Activated T-helper 1 cell treated with anti-CD3 and anti-CD28 coated beads, Interleukin-12 subunit alpha, Interleukin-12 subunit beta, Interleukin-2, Interleukin-4 antibody, amounts not matched to agents 30 ng/mL and 10 ng/mL and 1 ng/mL, durations not matched to agents 14 hours and 24 hours and 36 hours (primary cell): ENCODE measurements at regions of chr17 and their contacts with region 1.

Region 1: DNA sequence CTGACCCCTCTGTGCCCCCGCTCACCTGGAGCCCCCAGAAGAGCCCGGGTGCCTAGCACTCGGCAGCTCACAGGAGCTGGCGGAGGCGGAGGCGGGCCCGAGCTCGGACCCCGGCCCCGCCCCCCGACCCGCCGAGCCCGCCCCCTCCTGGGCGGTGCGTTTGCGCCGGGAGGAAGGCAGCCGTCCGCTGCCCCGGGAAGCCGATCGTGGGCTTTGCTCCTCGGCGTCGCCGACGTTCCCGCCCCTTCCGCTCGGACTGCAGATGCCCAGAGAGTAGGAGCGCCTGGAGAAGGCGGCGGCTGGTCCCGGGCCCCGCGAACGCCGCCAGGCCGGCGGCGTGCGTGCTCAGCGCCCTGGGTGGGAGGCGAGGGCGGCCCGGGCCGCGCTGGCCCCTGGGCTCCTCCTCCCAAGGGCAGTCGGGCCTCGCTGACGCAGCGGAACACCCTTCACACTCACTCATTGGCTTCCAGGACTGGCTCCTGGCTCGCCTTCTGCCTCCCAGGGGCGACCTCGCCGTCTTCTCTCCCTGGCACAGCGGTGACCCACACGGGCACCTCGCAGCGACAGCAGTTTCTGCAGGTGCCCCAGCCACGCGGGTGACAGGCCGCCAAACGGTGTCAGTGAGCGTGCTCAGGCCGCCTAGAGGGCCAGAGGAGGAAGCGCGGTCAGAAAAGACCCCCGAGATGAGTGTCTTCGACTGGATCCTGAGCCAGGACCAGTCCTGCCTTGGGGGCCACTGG is at the start of gene PLSCR3:
- DNase-seq: peak; percentile 82
- H3K4me3 Mint-ChIP-seq: peak within 1 kb of the TSS; percentile 97
- H3K27ac Mint-ChIP-seq: peak within 1 kb of the TSS; percentile 96
- H3K4me1 Mint-ChIP-seq: peaks cover 22% of the 10 kb centered on the region
- H3K27me3 Mint-ChIP-seq: peaks cover 2% of the 10 kb centered on the region
- total RNA-seq, gene PLSCR3: 77.1 and 78.2 TPM in 2 replicates

Region 2: DNA sequence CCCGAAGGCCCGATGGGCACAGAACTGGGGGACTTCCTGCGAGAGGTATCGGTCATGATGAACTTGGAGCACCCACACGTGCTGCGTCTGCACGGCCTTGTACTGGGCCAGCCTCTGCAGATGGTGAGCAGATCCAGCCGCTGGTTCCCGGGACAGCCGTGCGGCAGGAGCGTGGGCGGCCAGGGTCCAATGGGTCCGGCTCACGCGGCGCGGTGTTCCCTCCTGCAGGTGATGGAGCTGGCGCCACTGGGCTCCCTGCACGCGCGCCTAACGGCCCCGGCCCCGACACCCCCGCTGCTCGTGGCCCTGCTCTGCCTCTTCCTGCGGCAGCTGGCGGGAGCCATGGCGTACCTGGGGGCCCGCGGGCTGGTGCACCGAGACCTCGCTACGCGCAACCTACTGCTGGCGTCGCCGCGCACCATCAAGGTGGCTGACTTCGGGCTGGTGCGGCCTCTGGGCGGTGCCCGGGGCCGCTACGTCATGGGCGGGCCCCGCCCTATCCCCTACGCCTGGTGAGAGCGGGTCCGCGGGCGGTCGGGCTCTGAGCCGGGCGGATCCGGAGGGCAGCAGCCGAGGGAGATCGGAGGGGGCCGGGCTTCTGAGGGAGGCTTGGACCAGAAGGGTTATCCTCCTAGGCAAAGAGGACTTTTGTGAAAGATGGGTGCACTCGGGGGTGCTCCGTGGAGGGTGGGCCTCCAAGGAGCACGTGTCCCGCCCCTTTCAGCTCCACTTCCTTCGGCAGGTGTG is 10.7 kb before region 1 on chr17:
- intact Hi-C with region 1: loop called (anchors 1 kb)
- DNase-seq: peak; percentile 75
- H3K4me3 Mint-ChIP-seq: peak overlapping the region; percentile 77
- H3K27ac Mint-ChIP-seq: no peak overlapping the region
- H3K4me1 Mint-ChIP-seq: peaks cover 5% of the 10 kb centered on the region
- H3K27me3 Mint-ChIP-seq: peaks cover 35% of the 10 kb centered on the region